Activated CD4-positive, alpha-beta memory T cell treated with anti-CD3 and anti-CD28 coated beads for 36 hours (primary cell): ENCODE measurements at regions of chr1 and their contacts with region 1.

Region 1: DNA sequence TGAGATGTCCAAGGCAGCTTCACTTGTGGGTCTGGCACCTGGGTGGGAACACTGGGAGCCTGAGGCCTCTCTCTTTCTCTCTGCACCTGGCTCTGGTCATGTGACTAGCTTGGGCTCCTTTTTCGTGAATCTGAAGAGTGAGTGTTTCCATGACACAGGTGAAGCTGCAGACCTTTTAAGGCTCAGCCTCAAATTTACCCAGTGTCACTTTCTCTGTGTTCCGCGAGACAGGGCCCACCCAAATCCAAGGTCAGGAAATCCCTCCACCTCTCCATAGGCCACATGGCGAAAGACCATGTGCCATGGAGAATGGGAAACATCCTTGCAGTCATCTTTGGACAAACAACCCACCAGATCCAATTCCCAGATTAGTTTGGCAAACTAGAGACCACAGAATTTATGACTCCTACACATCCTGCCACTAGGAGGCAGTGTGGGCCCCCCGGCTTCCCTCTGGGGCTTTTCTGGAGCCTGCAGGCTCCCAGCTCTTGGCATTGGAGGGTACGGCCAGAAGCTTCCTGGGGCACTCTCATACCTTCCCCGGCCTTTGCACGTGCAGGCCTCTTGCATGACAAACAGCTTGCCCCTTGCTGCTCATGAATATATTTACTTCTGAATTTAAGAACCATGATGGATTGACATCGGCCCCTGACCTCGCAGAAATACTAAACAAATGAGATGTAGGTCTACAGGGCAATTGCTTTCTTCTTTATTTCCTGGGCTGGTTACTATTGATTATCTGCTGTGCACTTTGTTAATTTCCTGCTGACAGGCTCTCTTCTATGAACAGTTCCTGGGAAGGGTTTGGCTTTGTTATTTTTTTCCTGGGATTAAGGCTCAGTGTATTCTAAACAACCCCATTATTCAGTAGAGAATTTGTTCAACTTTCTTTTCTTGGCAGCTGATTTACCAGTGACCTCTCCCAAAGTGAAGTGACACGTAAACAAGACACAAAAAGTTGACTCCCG is 180.7 kb downstream of the KAZN start:
- DNase-seq: peak; percentile 39
- H3K4me3 Mint-ChIP-seq: no peak overlapping the region
- H3K27ac Mint-ChIP-seq: no peak overlapping the region
- H3K4me1 Mint-ChIP-seq: no peaks in the 10 kb centered on the region
- H3K27me3 Mint-ChIP-seq: peaks cover 7% of the 10 kb centered on the region

Region 2: DNA sequence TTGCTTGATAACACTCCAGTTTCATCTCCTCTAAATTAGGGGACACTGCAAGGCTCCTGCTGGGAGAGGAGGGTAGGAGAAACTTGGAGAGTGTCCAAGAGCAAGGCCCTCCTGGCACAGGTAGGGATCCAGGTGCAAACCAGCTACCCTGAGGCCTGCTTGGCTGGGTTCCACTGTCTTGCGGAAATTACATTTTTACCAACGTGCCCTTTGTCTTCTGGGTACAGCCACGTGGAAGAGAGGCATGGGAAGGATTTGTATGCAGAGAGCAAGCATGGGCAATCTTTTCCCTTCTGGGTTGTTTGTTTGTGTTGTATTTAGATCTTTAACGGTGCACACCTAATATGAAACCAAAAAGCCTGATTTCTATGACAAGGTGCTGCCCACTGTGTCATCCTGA is 946.6 kb before region 1 on chr1:
- CTCF ChIA-PET with region 1: no interaction called
- POLR2A ChIA-PET with region 1: no interaction called
- intact Hi-C with region 1: no loop called
- DNase-seq: no peak
- H3K4me3 Mint-ChIP-seq: no peak overlapping the region
- H3K27ac Mint-ChIP-seq: no peak overlapping the region
- H3K4me1 Mint-ChIP-seq: peaks cover 6% of the 10 kb centered on the region
- H3K27me3 Mint-ChIP-seq: peaks cover 14% of the 10 kb centered on the region

Region 3: GRCh38 chr1:14756617-14757285 is 22.4 kb before region 1 on chr1:
- CTCF ChIA-PET with region 1: no interaction called
- POLR2A ChIA-PET with region 1: no interaction called
- intact Hi-C with region 1: no loop called
- DNase-seq: no peak
- H3K4me3 Mint-ChIP-seq: no peak overlapping the region
- H3K27ac Mint-ChIP-seq: no peak overlapping the region
- H3K4me1 Mint-ChIP-seq: no peaks in the 10 kb centered on the region
- H3K27me3 Mint-ChIP-seq: peaks cover 7% of the 10 kb centered on the region

Region 4: DNA sequence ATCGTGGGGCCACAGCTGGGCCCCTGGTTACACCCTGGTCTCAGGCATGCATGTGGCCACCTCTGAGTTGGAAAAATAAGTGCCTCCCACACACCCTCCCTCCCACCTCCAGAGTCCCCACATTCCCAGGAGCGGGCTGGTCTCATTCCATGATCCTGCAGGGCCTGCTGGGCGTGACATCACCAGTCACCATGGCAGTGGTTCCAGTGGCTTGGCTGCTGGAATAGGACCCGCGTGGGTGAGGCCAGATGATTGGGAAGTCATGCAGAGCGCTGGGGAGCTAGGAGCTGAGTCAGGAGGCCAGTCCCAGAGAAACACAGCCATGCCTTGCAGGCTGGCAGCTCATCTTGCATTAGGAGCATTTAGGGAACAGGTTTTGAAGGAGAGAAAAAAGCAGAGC is 248.9 kb after region 1 on chr1:
- CTCF ChIA-PET with region 1: interaction called, 18 read pairs
- POLR2A ChIA-PET with region 1: no interaction called
- intact Hi-C with region 1: no loop called
- DNase-seq: no peak
- H3K4me3 Mint-ChIP-seq: no peak overlapping the region
- H3K27ac Mint-ChIP-seq: no peak overlapping the region
- H3K4me1 Mint-ChIP-seq: no peaks in the 10 kb centered on the region
- H3K27me3 Mint-ChIP-seq: peaks cover 5% of the 10 kb centered on the region